Activated CD4-positive, alpha-beta T cell treated with anti-CD3 and anti-CD28 coated beads for 36 hours (primary cell): ENCODE measurements at regions of chr11 and their contacts with region 1.

Region 1: GRCh38 chr11:76919887-76920746 is 59.4 kb downstream of the ACER3 start:
- DNase-seq: peak; percentile 73
- ATAC-seq: peak; percentile 80
- H3K4me3 Mint-ChIP-seq: no peak overlapping the region
- H3K27ac Mint-ChIP-seq: no peak overlapping the region
- H3K4me1 Mint-ChIP-seq: no peaks in the 10 kb centered on the region
- H3K27me3 Mint-ChIP-seq: no peaks in the 10 kb centered on the region

Region 2: DNA sequence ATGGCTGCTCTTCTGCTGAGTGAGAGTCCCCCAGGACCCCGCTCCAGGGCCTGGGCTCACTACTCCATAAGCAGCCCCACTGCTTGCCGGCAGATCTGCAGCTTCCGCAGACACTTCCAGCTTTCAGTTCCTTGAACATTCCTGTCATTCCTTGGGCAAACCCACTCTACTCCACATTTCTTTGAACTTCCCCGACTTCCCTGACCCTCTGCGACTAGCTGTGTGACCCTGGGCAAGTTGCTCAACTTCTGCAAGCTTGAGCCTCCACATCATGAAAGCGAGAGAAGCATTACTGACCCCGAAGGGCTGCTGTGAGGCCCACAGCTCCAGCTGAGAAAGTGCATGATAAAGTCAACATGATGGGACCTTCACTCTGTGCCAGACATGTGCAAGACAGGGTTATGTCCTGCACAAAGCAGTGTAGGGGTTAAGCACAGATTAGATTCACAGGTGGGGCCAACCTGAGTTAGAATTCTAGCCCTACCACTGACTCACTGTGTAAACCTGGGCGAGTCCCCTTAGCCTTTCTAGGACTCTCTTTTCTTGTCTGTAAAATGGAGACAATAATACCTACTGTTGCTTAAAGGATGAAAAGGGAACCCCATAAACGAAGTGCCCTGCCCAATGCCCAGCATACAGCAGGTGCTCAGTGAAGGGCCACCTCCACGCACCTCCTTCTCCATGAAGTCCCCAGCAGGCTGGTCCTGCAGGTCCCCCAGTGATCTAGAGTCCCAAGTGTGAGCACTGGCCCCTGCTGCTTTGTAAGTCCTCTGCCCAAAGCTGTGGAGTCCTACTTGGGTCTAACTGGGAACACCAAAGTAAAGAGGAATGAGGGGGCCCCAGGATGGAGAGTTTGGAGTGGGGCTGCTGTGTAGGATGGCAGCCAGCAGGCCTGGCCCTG is 590.8 kb before region 1 on chr11:
- CTCF ChIA-PET with region 1: no interaction called
- POLR2A ChIA-PET with region 1: no interaction called
- intact Hi-C with region 1: no loop called
- DNase-seq: no peak
- ATAC-seq: no peak
- H3K4me3 Mint-ChIP-seq: no peak overlapping the region
- H3K27ac Mint-ChIP-seq: no peak overlapping the region
- H3K4me1 Mint-ChIP-seq: no peaks in the 10 kb centered on the region
- H3K27me3 Mint-ChIP-seq: peaks cover 2% of the 10 kb centered on the region

Region 3: GRCh38 chr11:76444384-76445123 is 475.6 kb before region 1 on chr11 and contains the start of gene EMSY:
- CTCF ChIA-PET with region 1: no interaction called
- POLR2A ChIA-PET with region 1: no interaction called
- intact Hi-C with region 1: no loop called
- DNase-seq: peak; percentile 95
- ATAC-seq: peak; percentile 94
- H3K4me3 Mint-ChIP-seq: peak within 1 kb of the TSS; percentile 96
- H3K27ac Mint-ChIP-seq: peak within 1 kb of the TSS; percentile 94
- H3K4me1 Mint-ChIP-seq: peaks cover 27% of the 10 kb centered on the region
- H3K27me3 Mint-ChIP-seq: no peaks in the 10 kb centered on the region
- total RNA-seq, gene EMSY: 28.5 to 35.4 TPM

Region 4: GRCh38 chr11:76654298-76654851 is 265.7 kb before region 1 on chr11:
- CTCF ChIA-PET with region 1: no interaction called
- POLR2A ChIA-PET with region 1: no interaction called
- intact Hi-C with region 1: no loop called
- DNase-seq: no peak
- ATAC-seq: no peak
- H3K4me3 Mint-ChIP-seq: no peak overlapping the region
- H3K27ac Mint-ChIP-seq: no peak overlapping the region
- H3K4me1 Mint-ChIP-seq: no peaks in the 10 kb centered on the region
- H3K27me3 Mint-ChIP-seq: peaks cover 9% of the 10 kb centered on the region

Region 5: GRCh38 chr11:76728778-76729177 is 191.3 kb before region 1 on chr11:
- CTCF ChIA-PET with region 1: interaction called, 51 read pairs
- POLR2A ChIA-PET with region 1: no interaction called
- intact Hi-C with region 1: no loop called
- DNase-seq: no peak
- ATAC-seq: peak; percentile 78
- H3K4me3 Mint-ChIP-seq: no peak overlapping the region
- H3K27ac Mint-ChIP-seq: no peak overlapping the region
- H3K4me1 Mint-ChIP-seq: no peaks in the 10 kb centered on the region
- H3K27me3 Mint-ChIP-seq: peaks cover 8% of the 10 kb centered on the region

Region 6: DNA sequence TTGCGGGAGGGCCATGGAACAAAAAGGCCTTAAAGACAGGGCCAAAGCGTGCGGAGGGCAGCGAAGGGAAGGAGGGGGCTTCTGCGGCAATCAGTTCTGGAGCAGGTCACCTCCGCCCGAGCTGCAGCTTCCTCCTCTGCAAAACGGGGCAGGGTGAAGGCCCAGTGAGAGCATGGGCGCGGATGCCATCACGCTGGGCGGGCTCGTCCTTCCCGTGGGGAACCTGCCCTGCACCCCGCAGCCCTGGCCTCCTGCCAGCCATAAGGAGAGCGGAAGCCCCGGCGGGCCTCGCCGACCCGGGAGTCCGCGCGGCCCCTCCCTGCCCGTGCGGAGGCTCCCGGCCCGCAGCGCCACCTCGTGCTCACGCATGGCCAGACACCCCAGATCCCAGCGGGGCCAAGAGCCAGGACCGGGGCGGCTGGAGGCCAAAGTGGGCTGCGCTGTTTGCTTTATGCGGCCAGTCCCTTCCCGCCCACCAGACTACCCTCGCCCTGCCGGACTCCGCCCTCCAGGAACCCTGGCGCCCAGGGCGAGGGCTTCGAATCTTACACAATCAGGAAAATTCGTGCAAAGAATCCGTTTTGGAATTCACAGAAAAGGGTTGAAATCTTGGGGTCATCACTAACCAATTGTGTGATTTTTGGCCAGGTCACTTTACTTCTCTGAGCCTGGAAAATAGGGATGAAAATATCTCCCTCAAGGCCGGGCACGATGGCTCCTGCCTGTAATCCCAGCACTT is 120.9 kb before region 1 on chr11:
- CTCF ChIA-PET with region 1: interaction called, 42 read pairs
- POLR2A ChIA-PET with region 1: no interaction called
- intact Hi-C with region 1: no loop called
- DNase-seq: peak; percentile 87
- ATAC-seq: peak; percentile 81
- H3K4me3 Mint-ChIP-seq: peak overlapping the region; percentile 33
- H3K27ac Mint-ChIP-seq: no peak overlapping the region
- H3K4me1 Mint-ChIP-seq: peaks cover 19% of the 10 kb centered on the region
- H3K27me3 Mint-ChIP-seq: peaks cover 2% of the 10 kb centered on the region

Region 7: GRCh38 chr11:76834151-76834550 is 86.0 kb before region 1 on chr11:
- CTCF ChIA-PET with region 1: interaction called, 10 read pairs
- POLR2A ChIA-PET with region 1: no interaction called
- intact Hi-C with region 1: no loop called
- DNase-seq: no peak
- ATAC-seq: no peak
- H3K4me3 Mint-ChIP-seq: no peak overlapping the region
- H3K27ac Mint-ChIP-seq: no peak overlapping the region
- H3K4me1 Mint-ChIP-seq: no peaks in the 10 kb centered on the region
- H3K27me3 Mint-ChIP-seq: peaks cover 10% of the 10 kb centered on the region

Region 8: GRCh38 chr11:76889411-76889975 is 30.6 kb before region 1 on chr11:
- CTCF ChIA-PET with region 1: interaction called, 50 read pairs
- POLR2A ChIA-PET with region 1: no interaction called
- intact Hi-C with region 1: no loop called
- DNase-seq: no peak
- ATAC-seq: no peak
- H3K4me3 Mint-ChIP-seq: no peak overlapping the region
- H3K27ac Mint-ChIP-seq: no peak overlapping the region
- H3K4me1 Mint-ChIP-seq: peaks cover 10% of the 10 kb centered on the region
- H3K27me3 Mint-ChIP-seq: no peaks in the 10 kb centered on the region

Region 9: DNA sequence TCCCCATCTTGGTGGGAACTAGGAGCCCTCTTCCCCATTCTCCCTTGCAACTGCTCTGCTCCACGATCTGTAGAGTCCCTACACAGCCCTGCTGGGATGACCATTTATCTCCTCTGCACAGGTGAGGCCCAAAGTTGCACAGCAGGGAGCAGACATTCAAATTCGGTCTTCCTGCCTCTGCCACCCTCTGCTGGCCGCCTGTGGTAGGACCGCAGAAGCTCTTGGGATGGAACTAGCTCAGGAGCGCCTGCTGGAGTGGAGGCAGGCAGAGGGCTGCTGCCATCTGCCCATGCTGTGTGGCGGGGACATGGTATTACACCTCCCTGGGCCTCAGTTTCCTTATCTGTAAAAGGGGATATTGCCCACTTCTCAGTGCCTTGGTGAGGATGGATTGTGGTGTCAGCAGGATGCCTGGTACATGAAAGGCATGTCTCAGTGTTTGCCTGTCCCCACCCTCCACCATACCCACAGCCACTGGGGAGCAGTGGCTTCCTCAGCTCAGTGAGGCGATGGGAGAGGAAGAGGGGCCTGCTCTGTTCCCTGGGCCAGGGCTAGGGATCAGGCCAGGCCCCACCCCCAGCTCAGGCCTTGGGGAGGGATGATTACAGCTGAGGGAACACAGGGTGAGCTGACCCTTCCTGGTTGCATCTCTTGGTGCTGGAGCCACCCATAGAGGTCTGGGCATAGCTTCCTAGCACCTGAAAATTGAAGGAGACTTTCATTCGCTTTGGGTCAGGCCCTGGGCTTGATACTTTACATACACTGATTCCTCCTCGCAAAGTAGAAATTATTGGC is 171.2 kb after region 1 on chr11:
- CTCF ChIA-PET with region 1: interaction called, 18 read pairs
- POLR2A ChIA-PET with region 1: no interaction called
- intact Hi-C with region 1: loop called (anchors 1 to 5 kb)
- DNase-seq: peak; percentile 90
- ATAC-seq: peak; percentile 99
- H3K4me3 Mint-ChIP-seq: no peak overlapping the region
- H3K27ac Mint-ChIP-seq: no peak overlapping the region
- H3K4me1 Mint-ChIP-seq: peaks cover 4% of the 10 kb centered on the region
- H3K27me3 Mint-ChIP-seq: no peaks in the 10 kb centered on the region